ENCODE measurements at regions of chr18 and their contacts with region 1.

Region 1: GRCh38 chr18:59851784-59852399 is 47.9 kb upstream of the PMAIP1 start:
- DNase-seq: no peak
- ATAC-seq: no peak
- H3K4me3 ChIP-seq: no peak overlapping the region
- H3K27ac ChIP-seq: no peak overlapping the region
- H3K4me1 ChIP-seq: no peaks in the 10 kb centered on the region
- H3K27me3 ChIP-seq: no peaks in the 10 kb centered on the region
- CTCF ChIP-seq: no peak

Region 2: GRCh38 chr18:59744271-59744721 is 107.6 kb before region 1 on chr18:
- CTCF ChIA-PET with region 1: interaction called, 10 read pairs
- POLR2A ChIA-PET with region 1: no interaction called
- in situ Hi-C with region 1: no loop called
- intact Hi-C with region 1: no loop called
- DNase-seq: peak; percentile 12
- ATAC-seq: no peak
- H3K4me3 ChIP-seq: no peak overlapping the region
- H3K27ac ChIP-seq: no peak overlapping the region
- H3K4me1 ChIP-seq: no peaks in the 10 kb centered on the region
- H3K27me3 ChIP-seq: no peaks in the 10 kb centered on the region
- CTCF ChIP-seq: no peak

Measured in Panc1 (cell line).